ENCODE measurements at regions of chr17 and their contacts with region 1.

Region 1: GRCh38 chr17:37047631-37048104 is 98.9 kb downstream of the AATF start:
- DNase-seq: peak; percentile 72 to 80 (median 78)
- ATAC-seq: peak; percentile 40
- H3K4me3 ChIP-seq: no peak overlapping the region
- H3K27ac ChIP-seq: no peak overlapping the region
- H3K4me1 ChIP-seq: no peaks in the 10 kb centered on the region
- H3K27me3 ChIP-seq: no peaks in the 10 kb centered on the region
- CTCF ChIP-seq: peak; percentile 71 to 88 (median 73)
- POLR2A ChIP-seq: no peak

Region 2: DNA sequence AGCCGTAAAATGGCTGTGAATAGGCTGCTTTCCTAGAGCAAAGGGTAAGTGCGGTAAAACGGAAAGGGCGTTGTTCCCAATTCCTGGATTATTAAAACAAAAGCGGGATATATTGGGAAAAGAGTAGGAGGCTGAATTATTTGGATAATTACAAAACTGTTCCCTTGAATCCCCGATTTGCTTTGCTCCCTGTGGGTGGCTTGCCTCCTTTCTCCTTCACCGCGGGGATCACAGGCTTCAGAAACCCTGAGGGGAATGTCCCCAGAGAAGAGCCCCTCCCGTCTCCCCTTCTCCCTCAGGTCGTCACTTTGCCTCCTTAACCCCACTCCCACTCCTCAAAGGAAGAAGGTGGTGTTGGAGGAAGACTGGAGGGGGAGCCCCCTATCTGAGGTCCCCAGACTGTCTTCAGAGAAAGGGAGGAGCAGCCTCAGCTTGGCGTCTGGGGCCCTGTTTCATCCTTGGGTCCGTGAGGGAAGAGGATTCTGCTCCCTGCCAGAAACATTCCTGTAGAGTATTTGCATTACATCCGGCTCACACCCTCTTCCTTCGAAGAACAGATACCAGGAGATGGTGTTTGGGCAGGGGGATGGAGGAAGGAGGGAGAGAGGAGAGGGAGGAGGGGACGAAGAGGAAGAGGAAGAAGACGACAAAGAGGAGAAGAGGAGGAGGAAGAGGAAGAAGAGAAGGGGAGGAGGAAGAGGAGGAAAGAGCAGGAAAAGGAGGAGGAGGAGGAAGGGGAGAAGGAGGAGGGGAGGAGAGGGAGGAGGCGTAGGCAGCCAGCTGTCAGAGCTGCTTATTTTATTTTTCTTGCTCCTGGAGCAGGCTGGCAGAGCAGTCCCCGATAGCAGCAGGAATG is 414.5 kb before region 1 on chr17:
- intact Hi-C with region 1: loop called (anchors 5 kb)
- DNase-seq: no peak
- ATAC-seq: no peak
- H3K4me3 ChIP-seq: no peak overlapping the region
- H3K27ac ChIP-seq: no peak overlapping the region
- H3K4me1 ChIP-seq: no peaks in the 10 kb centered on the region
- H3K27me3 ChIP-seq: no peaks in the 10 kb centered on the region
- CTCF ChIP-seq: no peak
- POLR2A ChIP-seq: no peak

Region 3: GRCh38 chr17:36705874-36706731 is 341.6 kb before region 1 on chr17:
- intact Hi-C with region 1: loop called (anchors 5 kb)
- DNase-seq: peak; percentile 36 to 61 (median 42)
- ATAC-seq: peak; percentile 27
- H3K4me3 ChIP-seq: no peak overlapping the region
- H3K27ac ChIP-seq: no peak overlapping the region
- H3K4me1 ChIP-seq: peaks cover 8% of the 10 kb centered on the region
- H3K27me3 ChIP-seq: peaks cover 0 to 5% of the 10 kb centered on the region in 2 donors
- CTCF ChIP-seq: peak; percentile 8 to 59 (median 54)
- POLR2A ChIP-seq: no peak